Naive thymus-derived CD4-positive, alpha-beta T cell (primary cell): ENCODE measurements at regions of chr10 and their contacts with region 1.

Region 1: GRCh38 chr10:103416436-103417147 is 20.2 kb downstream of the PDCD11 start:
- DNase-seq: peak; percentile 29 to 62 (median 52)
- ATAC-seq: peak; percentile 64
- H3K4me3 ChIP-seq: no peak overlapping the region
- H3K4me3 Mint-ChIP-seq: no peak overlapping the region
- H3K27ac ChIP-seq: no peak overlapping the region
- H3K27ac Mint-ChIP-seq: no peak overlapping the region
- H3K4me1 ChIP-seq: no peaks in the 10 kb centered on the region
- H3K4me1 Mint-ChIP-seq: peaks cover 0 to 6% (median 0%) of the 10 kb centered on the region in 7 donors
- H3K27me3 ChIP-seq: no peaks in the 10 kb centered on the region
- H3K27me3 Mint-ChIP-seq: no peaks in the 10 kb centered on the region

Region 2: GRCh38 chr10:103382769-103383168 is 33.8 kb before region 1 on chr10:
- CTCF ChIA-PET with region 1: no interaction called
- POLR2A ChIA-PET with region 1: no interaction called
- intact Hi-C with region 1: no loop called
- DNase-seq: no peak
- ATAC-seq: no peak
- H3K4me3 ChIP-seq: no peak overlapping the region
- H3K4me3 Mint-ChIP-seq: no peak overlapping the region
- H3K27ac ChIP-seq: no peak overlapping the region
- H3K27ac Mint-ChIP-seq: no peak overlapping the region
- H3K4me1 ChIP-seq: no peaks in the 10 kb centered on the region
- H3K4me1 Mint-ChIP-seq: no peaks in the 10 kb centered on the region
- H3K27me3 ChIP-seq: no peaks in the 10 kb centered on the region
- H3K27me3 Mint-ChIP-seq: no peaks in the 10 kb centered on the region

Region 3: GRCh38 chr10:103451831-103452505 is 35.4 kb after region 1 on chr10 and contains the start of gene CALHM2:
- CTCF ChIA-PET with region 1: interaction called, 7 read pairs
- POLR2A ChIA-PET with region 1: interaction called, 3 read pairs
- intact Hi-C with region 1: loop called in 1 of 2 experiments (anchors 5 kb)
- DNase-seq: peak; percentile 24 to 72 (median 43)
- ATAC-seq: peak; percentile 79
- H3K4me3 ChIP-seq: peak within 1 kb of the TSS; percentile 77
- H3K4me3 Mint-ChIP-seq: peak within 1 kb of the TSS; percentile 82 to 97 (median 90)
- H3K27ac ChIP-seq: peak within 1 kb of the TSS; percentile 63
- H3K27ac Mint-ChIP-seq: peak within 1 kb of the TSS; percentile 51 to 96 (median 79)
- H3K4me1 ChIP-seq: peaks cover 18 to 34% of the 10 kb centered on the region in 2 donors
- H3K4me1 Mint-ChIP-seq: peaks cover 27 to 56% (median 47%) of the 10 kb centered on the region in 7 donors
- H3K27me3 ChIP-seq: no peaks in the 10 kb centered on the region
- H3K27me3 Mint-ChIP-seq: no peaks in the 10 kb centered on the region
- total RNA-seq, gene CALHM2: 3.4 to 67.2 (median 19.3) TPM

Region 4: DNA sequence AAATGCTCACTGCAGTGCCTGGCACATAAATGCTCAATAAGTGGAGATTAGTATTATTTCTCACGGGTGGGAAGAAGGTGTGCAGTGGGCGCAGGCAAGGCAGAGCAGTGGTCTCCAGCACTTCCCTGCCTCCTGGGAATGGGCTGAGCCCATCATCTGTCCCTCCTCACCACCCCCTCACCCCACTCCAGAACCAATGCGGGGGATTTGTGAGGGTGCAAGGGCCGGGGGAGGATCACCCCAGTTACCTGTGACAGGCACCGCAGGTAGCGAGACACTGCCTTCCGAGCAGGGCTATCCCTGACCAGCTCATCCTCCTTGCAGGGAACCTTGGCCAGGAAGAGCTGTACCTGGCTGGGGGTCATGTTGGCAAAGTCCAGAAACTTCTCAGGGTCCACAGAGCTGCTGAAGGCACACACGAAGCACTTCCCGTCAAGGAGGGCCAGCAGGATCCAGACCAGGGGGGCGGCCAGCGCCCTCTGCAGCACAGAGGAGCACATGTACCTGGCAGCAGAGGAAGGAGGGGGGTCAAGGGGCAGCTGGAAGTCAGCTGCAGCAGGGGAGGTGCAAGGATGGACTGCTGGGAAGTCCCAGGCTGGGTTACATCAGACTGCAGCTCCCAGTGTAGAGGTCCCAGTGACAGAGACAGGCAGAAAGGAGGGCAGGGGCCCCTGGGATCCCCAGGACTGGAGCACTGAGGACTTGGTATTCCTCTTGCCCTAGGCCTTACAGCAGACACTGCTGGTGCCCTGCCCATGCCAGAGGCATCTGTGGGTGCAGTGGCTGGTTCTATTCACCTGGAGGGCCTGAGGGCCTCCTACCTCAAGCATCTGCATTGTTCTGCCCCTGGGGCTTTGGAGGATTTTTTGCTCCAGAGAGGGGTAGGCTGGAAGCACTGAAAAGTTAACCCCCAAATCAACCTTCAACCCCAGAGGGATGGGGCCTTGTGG is 59.7 kb after region 1 on chr10:
- CTCF ChIA-PET with region 1: interaction called, 29 read pairs
- POLR2A ChIA-PET with region 1: no interaction called
- intact Hi-C with region 1: no loop called
- DNase-seq: no peak
- ATAC-seq: peak; percentile 39
- H3K4me3 ChIP-seq: no peak overlapping the region
- H3K4me3 Mint-ChIP-seq: no peak overlapping the region
- H3K27ac ChIP-seq: no peak overlapping the region
- H3K27ac Mint-ChIP-seq: no peak overlapping the region
- H3K4me1 ChIP-seq: peaks cover 9 to 14% of the 10 kb centered on the region in 2 donors
- H3K4me1 Mint-ChIP-seq: peaks cover 8 to 51% (median 13%) of the 10 kb centered on the region in 7 donors
- H3K27me3 ChIP-seq: no peaks in the 10 kb centered on the region
- H3K27me3 Mint-ChIP-seq: no peaks in the 10 kb centered on the region

Region 5: DNA sequence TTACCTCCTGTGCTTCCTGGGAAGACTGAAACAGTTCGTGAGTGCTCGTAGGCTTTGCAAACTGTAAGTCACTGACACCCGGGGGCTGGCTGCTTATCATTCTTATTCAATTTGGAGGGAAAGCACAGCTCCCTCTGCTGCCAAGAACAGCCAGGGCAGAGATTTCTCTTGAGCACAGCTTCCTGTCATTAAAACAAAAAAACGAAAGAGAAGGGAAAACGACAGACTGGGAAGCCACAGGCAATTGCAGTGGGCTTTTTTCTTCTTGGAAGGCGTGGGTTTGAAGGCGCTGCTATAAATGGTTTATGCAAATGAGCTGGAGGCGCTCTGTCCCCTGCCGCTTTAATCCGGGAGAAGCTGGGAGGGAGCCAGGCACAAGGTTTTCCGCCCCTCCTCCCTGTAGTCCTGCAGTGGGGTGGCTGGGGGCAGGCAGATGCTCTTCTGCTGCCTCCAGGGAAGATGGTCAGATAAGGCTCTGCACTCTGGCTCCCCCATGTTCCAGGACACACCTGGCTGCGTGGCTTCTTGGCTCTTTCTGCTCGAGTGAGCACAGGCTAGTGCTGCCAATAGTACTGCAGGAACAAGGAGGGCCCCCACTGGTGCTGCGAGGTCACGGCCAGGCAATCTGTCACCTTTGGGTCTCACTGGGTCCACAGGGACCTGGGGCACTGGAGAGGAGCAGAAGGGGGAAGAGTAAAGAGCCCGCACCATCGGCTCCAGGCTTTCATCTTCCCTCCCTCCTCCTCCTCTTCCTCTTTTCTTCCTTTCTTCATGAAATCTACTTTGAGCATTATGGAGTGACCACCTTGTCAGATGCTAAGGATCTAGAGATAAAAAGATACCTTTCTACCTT is 126.4 kb after region 1 on chr10:
- CTCF ChIA-PET with region 1: no interaction called
- POLR2A ChIA-PET with region 1: interaction called, 3 read pairs
- intact Hi-C with region 1: loop called in 1 of 2 experiments (anchors 1 kb)
- DNase-seq: peak in 4 of 9 donors; percentile 28 to 43 (median 34)
- ATAC-seq: peak; percentile 54
- H3K4me3 ChIP-seq: peak overlapping the region; percentile 54
- H3K4me3 Mint-ChIP-seq: peak overlapping the region; percentile 70 to 91 (median 84)
- H3K27ac ChIP-seq: no peak overlapping the region
- H3K27ac Mint-ChIP-seq: peak overlapping the region in 7 of 9 donors; percentile 2 to 76 (median 46)
- H3K4me1 ChIP-seq: peaks cover 0 to 10% of the 10 kb centered on the region in 2 donors
- H3K4me1 Mint-ChIP-seq: peaks cover 4 to 15% (median 10%) of the 10 kb centered on the region in 7 donors
- H3K27me3 ChIP-seq: no peaks in the 10 kb centered on the region
- H3K27me3 Mint-ChIP-seq: peaks cover 16 to 22% (median 18%) of the 10 kb centered on the region in 5 donors